ENCODE measurements at regions of chr10 and their contacts with region 1.

Region 1: GRCh38 chr10:11525503-11525902 is 85.9 kb downstream of the USP6NL start:
- DNase-seq: peak; percentile 84
- H3K4me3 ChIP-seq: no peak overlapping the region
- H3K27ac ChIP-seq: peak overlapping the region in 2 of 4 donors; percentile 12 to 34
- H3K4me1 ChIP-seq: peaks cover 0 to 17% (median 5%) of the 10 kb centered on the region in 4 donors
- H3K27me3 ChIP-seq: no peaks in the 10 kb centered on the region
- CTCF ChIP-seq: no peak
- EP300 ChIP-seq: peak in 1 of 4 donors; percentile 55
- POLR2A ChIP-seq: no peak

Region 2: DNA sequence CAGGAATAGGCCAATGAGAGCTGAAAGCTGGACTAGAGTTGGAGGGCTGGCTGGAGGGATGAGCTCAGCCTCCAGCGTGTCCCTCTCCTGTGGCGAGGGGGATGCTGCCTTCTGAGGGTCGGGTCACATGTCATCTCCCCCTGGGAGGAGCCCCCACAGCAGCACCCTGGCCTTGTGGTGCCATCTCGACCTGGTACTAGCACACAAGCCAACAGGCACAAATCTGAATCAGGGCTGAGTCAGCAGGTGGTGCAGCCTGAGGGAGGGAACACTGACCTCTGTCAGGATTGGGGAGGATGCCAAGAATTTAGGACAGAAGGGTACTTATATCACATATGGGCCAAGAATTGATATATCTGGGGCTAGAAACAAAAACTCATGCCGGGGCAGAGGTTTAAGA is 227.4 kb before region 1 on chr10:
- intact Hi-C with region 1: no loop called
- DNase-seq: no peak
- H3K4me3 ChIP-seq: no peak overlapping the region
- H3K27ac ChIP-seq: no peak overlapping the region
- H3K4me1 ChIP-seq: no peaks in the 10 kb centered on the region
- H3K27me3 ChIP-seq: no peaks in the 10 kb centered on the region
- CTCF ChIP-seq: no peak
- EP300 ChIP-seq: no peak
- POLR2A ChIP-seq: no peak

Region 3: DNA sequence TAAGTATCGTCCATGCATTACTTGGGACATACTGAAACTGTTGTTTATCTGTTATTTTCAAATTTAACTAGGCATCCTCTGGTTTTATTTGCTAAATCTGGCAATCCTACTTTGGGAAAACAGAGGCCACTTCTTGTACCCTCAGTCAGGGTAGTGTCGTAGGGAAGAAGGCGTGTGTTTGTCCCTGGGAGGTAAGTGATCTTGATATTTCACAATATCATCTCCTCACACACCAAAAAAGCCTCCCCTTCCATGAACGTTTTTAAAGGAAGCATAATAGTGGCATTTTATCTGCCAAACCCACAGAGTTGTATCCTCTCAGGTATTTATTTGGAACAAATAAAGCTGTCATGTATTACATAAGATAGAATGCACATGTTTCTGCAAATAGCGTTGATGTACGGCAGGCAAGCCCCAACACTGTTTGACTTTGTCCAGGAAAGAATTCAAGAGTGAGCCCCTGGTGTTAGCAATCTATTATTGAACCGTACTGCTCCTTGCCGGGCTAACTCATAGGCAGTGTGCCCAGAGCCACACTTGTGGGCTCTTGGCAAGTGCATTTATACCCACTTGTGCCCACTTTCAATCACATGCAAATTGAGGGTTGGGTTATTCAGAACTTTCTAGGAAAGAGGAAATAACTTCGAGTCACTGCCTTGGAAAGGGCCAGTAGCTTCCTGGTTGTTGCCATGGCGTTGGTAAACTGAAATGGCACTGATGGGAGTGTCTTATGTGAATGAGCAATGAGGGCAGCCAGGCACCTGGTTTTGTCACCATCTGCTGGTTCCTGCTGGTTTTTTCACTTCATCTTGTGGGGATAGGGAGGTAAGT is 180.1 kb before region 1 on chr10:
- intact Hi-C with region 1: no loop called
- DNase-seq: no peak
- H3K4me3 ChIP-seq: no peak overlapping the region
- H3K27ac ChIP-seq: no peak overlapping the region
- H3K4me1 ChIP-seq: peaks cover 0 to 14% (median 10%) of the 10 kb centered on the region in 4 donors
- H3K27me3 ChIP-seq: no peaks in the 10 kb centered on the region
- CTCF ChIP-seq: no peak
- EP300 ChIP-seq: no peak
- POLR2A ChIP-seq: no peak

Region 4: GRCh38 chr10:11611248-11612020 is 85.9 kb after region 1 on chr10 and contains the start of gene USP6NL:
- intact Hi-C with region 1: loop called (anchors 5 kb)
- DNase-seq: peak; percentile 93
- H3K4me3 ChIP-seq: peak within 1 kb of the TSS; percentile 70 to 98 (median 85)
- H3K27ac ChIP-seq: peak within 1 kb of the TSS; percentile 86 to 92 (median 89)
- H3K4me1 ChIP-seq: peaks cover 0 to 24% (median 14%) of the 10 kb centered on the region in 4 donors
- H3K27me3 ChIP-seq: no peaks in the 10 kb centered on the region
- CTCF ChIP-seq: no peak
- EP300 ChIP-seq: no peak
- POLR2A ChIP-seq: no peak
- total RNA-seq, gene USP6NL: 10.3 to 11.4 (median 10.9) TPM

Measured in sigmoid colon (tissue), 7 donors.